ENCODE measurements at regions of chr6 and their contacts with region 1.

Region 1: GRCh38 chr6:112087136-112087911 is at the starts of genes FAM229B and TUBE1:
- DNase-seq: peak; percentile 74
- ATAC-seq: peak; percentile 96
- H3K4me3 Mint-ChIP-seq: no peak within 1 kb of the TSS
- H3K27ac Mint-ChIP-seq: no peak within 1 kb of the TSS
- H3K4me1 Mint-ChIP-seq: no peaks in the 10 kb centered on the region
- H3K27me3 Mint-ChIP-seq: peaks cover 14% of the 10 kb centered on the region
- CTCF ChIP-seq: no peak
- total RNA-seq, gene FAM229B: 2.0 and 2.6 TPM in 2 replicates
- total RNA-seq, gene TUBE1: 24.1 and 28.0 TPM in 2 replicates

Region 2: DNA sequence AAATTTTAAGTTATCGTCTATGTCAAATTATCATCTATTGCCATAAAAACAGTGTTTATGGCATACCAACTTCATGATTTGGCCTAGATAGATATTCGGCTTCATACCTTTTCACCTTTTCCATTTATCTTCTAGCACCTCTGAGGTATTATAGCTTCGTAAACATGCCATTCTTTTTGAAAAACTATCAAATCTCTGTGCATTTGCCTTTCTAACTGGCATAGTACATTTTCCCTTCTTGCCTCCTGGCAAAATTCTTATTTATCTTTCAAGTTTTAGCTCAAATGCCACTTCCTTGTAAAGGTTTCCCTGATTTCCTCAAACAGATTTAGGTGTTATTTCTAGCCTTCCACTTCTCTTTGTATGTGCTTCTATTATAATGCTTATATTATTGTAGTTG is 597.3 kb before region 1 on chr6:
- CTCF ChIA-PET with region 1: no interaction called
- POLR2A ChIA-PET with region 1: interaction called, 11 read pairs
- intact Hi-C with region 1: no loop called
- DNase-seq: no peak
- ATAC-seq: no peak
- H3K4me3 Mint-ChIP-seq: no peak overlapping the region
- H3K27ac Mint-ChIP-seq: no peak overlapping the region
- H3K4me1 Mint-ChIP-seq: peaks cover 16% of the 10 kb centered on the region
- H3K27me3 Mint-ChIP-seq: no peaks in the 10 kb centered on the region
- CTCF ChIP-seq: no peak

Region 3: GRCh38 chr6:111605100-111605751 is 482.1 kb before region 1 on chr6:
- CTCF ChIA-PET with region 1: no interaction called
- POLR2A ChIA-PET with region 1: no interaction called
- intact Hi-C with region 1: loop called (anchors 5 kb)
- DNase-seq: peak; percentile 23
- ATAC-seq: peak; percentile 43
- H3K4me3 Mint-ChIP-seq: peak overlapping the region; percentile 90
- H3K27ac Mint-ChIP-seq: peak overlapping the region; percentile 92
- H3K4me1 Mint-ChIP-seq: peaks cover 44% of the 10 kb centered on the region
- H3K27me3 Mint-ChIP-seq: no peaks in the 10 kb centered on the region
- CTCF ChIP-seq: no peak

Region 4: GRCh38 chr6:111841822-111842221 is 245.5 kb before region 1 on chr6:
- CTCF ChIA-PET with region 1: no interaction called
- POLR2A ChIA-PET with region 1: no interaction called
- intact Hi-C with region 1: no loop called
- DNase-seq: no peak
- ATAC-seq: no peak
- H3K4me3 Mint-ChIP-seq: no peak overlapping the region
- H3K27ac Mint-ChIP-seq: no peak overlapping the region
- H3K4me1 Mint-ChIP-seq: peaks cover 24% of the 10 kb centered on the region
- H3K27me3 Mint-ChIP-seq: no peaks in the 10 kb centered on the region
- CTCF ChIP-seq: no peak

Region 5: GRCh38 chr6:112163295-112164257 is 76.3 kb after region 1 on chr6:
- CTCF ChIA-PET with region 1: interaction called, 23 read pairs
- POLR2A ChIA-PET with region 1: no interaction called
- intact Hi-C with region 1: loop called (anchors 1 kb)
- DNase-seq: peak; percentile 58
- ATAC-seq: peak; percentile 98
- H3K4me3 Mint-ChIP-seq: peak overlapping the region; percentile 32
- H3K27ac Mint-ChIP-seq: no peak overlapping the region
- H3K4me1 Mint-ChIP-seq: peaks cover 8% of the 10 kb centered on the region
- H3K27me3 Mint-ChIP-seq: peaks cover 40% of the 10 kb centered on the region
- CTCF ChIP-seq: no peak

Region 6: GRCh38 chr6:113805173-113805790 is 1718.0 kb after region 1 on chr6:
- CTCF ChIA-PET with region 1: no interaction called
- POLR2A ChIA-PET with region 1: no interaction called
- intact Hi-C with region 1: loop called (anchors 1 kb)
- DNase-seq: no peak
- ATAC-seq: peak; percentile 53
- H3K4me3 Mint-ChIP-seq: peak overlapping the region; percentile 52
- H3K27ac Mint-ChIP-seq: peak overlapping the region; percentile 67
- H3K4me1 Mint-ChIP-seq: peaks cover 56% of the 10 kb centered on the region
- H3K27me3 Mint-ChIP-seq: no peaks in the 10 kb centered on the region
- CTCF ChIP-seq: no peak

Region 7: DNA sequence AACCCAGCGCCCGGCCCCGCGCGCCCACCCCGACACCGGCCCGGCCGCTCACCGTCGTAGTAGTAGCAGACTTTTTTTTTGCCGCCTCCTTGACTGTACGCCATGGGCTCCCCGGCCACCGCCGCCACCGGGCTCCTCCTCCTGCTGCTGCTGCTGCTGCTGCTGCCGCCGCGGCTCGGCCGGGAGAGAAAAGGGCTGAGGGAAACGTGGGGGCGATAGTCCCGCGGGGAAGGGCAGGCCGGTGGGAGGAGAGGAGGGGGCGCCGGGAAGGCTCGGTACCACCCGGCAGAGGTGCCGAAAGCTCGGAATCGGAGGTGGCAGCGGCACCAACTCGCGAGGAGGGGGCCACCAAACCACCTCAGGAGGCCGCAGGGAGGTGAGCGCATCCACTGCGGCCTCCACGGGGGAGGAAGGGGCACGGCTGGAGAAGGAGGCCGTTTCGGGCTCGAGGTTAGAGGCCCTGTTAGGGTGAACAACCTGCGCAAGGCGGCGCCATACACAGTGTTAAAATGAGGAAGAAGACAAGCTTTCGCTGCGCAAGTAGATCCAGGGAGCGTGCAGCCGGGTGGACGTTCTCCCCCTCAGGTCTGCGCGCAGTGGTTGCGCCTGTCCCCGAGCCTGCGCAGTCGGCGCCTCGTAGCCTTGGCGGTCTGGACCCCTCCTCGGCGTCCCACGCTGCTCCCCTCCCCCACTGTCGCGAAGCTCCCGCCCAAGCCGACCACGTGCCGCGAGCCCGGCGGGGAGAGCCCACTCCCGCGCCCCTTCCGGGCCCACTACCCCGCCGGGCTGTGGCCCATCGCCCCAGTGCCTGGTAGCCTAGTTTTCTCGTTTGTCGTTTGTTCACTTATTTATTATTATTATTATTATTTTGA is 1883.7 kb after region 1 on chr6 and contains the start of gene HDAC2:
- CTCF ChIA-PET with region 1: no interaction called
- POLR2A ChIA-PET with region 1: interaction called, 6 read pairs
- intact Hi-C with region 1: loop called (anchors 2 kb)
- DNase-seq: peak; percentile 88
- ATAC-seq: peak; percentile 83
- H3K4me3 Mint-ChIP-seq: peak within 1 kb of the TSS; percentile 99
- H3K27ac Mint-ChIP-seq: peak within 1 kb of the TSS; percentile 98
- H3K4me1 Mint-ChIP-seq: peaks cover 36% of the 10 kb centered on the region
- H3K27me3 Mint-ChIP-seq: no peaks in the 10 kb centered on the region
- CTCF ChIP-seq: no peak
- total RNA-seq, gene HDAC2: 60.0 and 68.4 TPM in 2 replicates

Measured in activated B cell treated with CpG ODN at 0.5 μM for 24 hours (primary cell).